PC-9 (cell line): ENCODE measurements at regions of chr10 and their contacts with region 1.

Region 1: GRCh38 chr10:70758757-70759514 is 26.2 kb downstream of the TBATA start:
- DNase-seq: peak; percentile 51 to 66
- H3K4me3 ChIP-seq: no peak overlapping the region
- H3K27ac ChIP-seq: no peak overlapping the region
- H3K4me1 ChIP-seq: peaks cover 19% of the 10 kb centered on the region
- H3K27me3 ChIP-seq: no peaks in the 10 kb centered on the region
- CTCF ChIP-seq: peak; percentile 84

Region 2: DNA sequence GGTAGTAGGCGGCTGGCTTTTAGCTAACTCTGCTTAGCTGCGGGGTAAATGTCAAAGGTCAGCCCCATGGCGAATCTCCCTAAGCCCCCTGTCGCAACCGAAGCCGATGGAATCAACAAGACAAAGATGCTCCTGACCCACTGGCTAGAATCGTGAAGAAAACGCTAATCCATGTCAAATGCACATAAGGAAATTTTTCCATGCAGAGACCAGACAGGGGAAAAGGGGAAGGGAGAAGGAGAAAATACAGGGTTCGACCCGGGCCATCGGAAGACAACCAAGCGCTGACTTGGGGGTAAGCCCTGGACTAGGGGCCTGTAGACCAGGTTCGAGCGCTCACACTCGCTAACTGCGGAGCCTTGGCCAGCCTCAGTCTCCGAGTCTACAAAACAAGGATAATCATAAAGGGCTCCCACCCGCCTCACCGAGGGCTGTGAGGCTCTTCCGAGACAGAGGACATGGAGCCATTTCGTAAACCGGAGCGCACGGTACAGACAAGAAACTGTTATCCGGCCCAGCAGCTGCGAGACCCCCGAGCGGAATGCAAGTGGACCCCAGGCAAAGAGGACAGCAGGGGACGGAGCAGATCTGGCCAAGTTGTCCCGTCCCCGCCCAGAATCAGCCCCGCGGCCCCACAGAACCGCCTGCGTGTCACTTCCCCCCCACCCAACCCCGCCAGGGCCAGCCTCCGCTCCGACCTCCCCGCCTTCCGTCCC is 589.1 kb before region 1 on chr10:
- CTCF ChIA-PET with region 1: interaction called, 10 read pairs
- POLR2A ChIA-PET with region 1: no interaction called
- intact Hi-C with region 1: no loop called
- DNase-seq: no peak
- H3K4me3 ChIP-seq: peak overlapping the region; percentile 98
- H3K27ac ChIP-seq: 0 out of 2 replicates have a peak overlapping the region, but pooled peaks have one; percentile 68
- H3K4me1 ChIP-seq: peaks cover 36% of the 10 kb centered on the region
- H3K27me3 ChIP-seq: no peaks in the 10 kb centered on the region
- CTCF ChIP-seq: no peak

Region 3: GRCh38 chr10:70549962-70550458 is 208.9 kb before region 1 on chr10:
- CTCF ChIA-PET with region 1: interaction called, 3 read pairs
- POLR2A ChIA-PET with region 1: no interaction called
- intact Hi-C with region 1: loop called (anchors 1 kb)
- DNase-seq: peak; percentile 47 to 76
- H3K4me3 ChIP-seq: no peak overlapping the region
- H3K27ac ChIP-seq: no peak overlapping the region
- H3K4me1 ChIP-seq: no peaks in the 10 kb centered on the region
- H3K27me3 ChIP-seq: no peaks in the 10 kb centered on the region
- CTCF ChIP-seq: peak; percentile 98

Region 4: DNA sequence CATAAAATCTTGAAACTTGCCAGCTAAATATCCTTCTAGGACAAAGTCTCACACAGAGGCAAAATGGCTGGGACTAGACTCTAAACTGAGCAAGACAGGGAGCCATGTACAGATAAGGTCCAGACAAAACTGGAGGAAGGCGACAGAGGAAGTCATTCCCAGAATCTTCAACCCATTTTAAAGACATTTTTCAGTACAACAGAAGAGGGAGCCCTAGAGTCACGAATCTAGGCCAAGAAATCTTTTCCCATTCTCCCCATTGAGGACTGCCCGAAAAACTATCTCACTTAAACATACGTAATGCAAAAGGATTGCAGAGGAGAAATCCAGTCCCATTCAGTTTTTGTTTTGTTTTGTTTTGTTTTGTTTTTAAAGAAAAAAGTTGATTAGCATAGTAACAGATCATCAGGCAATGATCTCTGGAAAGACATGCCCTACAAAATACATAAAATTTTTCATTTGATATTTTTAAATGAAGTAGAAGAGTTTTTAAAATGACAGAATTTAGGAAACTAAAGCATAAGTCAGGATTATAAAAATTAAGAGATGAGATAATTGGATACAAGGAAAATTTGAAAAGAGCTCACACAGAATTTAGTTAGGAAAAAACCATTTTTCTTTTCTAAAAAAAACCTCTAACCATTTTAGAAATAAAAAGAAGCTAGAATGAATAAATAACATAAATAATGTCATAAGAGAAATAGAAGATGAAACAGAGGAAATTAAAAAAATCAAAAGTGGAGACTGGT is 139.5 kb before region 1 on chr10:
- CTCF ChIA-PET with region 1: no interaction called
- POLR2A ChIA-PET with region 1: no interaction called
- intact Hi-C with region 1: loop called (anchors 1 kb)
- DNase-seq: peak in 1 of 2 experiments; percentile 37
- H3K4me3 ChIP-seq: no peak overlapping the region
- H3K27ac ChIP-seq: no peak overlapping the region
- H3K4me1 ChIP-seq: no peaks in the 10 kb centered on the region
- H3K27me3 ChIP-seq: no peaks in the 10 kb centered on the region
- CTCF ChIP-seq: peak; percentile 69

Region 5: DNA sequence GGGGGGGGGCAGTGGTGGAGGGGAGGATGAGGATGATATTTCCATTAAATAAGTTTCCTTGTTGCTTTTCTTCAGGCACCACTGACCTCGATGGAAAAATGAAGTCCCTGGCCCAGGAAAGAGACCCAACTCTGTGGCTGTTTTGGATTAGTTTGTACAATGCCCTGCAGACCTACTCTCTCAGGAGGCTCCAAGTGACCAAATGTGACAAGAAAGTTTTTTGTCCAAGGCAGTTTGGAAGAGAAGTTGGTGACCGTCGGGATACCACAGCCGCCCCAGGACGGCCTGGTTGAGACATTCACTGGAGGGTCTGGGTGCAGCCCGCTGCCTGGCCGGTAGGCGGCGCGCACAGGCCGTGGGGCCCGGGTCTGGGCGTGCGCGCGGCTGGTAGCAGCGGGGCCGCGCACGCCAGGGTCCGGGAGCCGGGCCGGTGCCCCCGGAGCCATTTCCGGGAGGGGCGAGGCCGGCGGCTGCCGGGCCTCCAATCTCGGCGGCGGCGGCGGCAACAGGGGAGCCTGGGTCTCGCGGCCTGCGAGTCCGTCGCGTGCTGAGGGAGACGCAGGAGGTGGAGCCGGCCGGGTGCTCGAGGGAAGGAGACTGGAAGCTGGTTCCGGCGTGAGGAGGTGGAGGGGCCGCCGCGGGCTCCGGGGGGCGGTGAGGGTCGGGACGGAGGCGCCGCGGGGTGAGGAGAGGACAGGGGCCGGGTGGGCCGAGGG is 56.7 kb after region 1 on chr10 and contains the start of gene SGPL1:
- CTCF ChIA-PET with region 1: no interaction called
- POLR2A ChIA-PET with region 1: no interaction called
- intact Hi-C with region 1: loop called (anchors 1 kb)
- DNase-seq: peak; percentile 68 to 91
- H3K4me3 ChIP-seq: peak within 1 kb of the TSS; percentile 68
- H3K27ac ChIP-seq: peak within 1 kb of the TSS; percentile 89
- H3K4me1 ChIP-seq: peaks cover 45% of the 10 kb centered on the region
- H3K27me3 ChIP-seq: no peaks in the 10 kb centered on the region
- CTCF ChIP-seq: peak; percentile 84
- total RNA-seq, gene SGPL1: 96.9 and 141 TPM in 2 replicates

Region 6: GRCh38 chr10:71303569-71303907 is 544.6 kb after region 1 on chr10:
- CTCF ChIA-PET with region 1: interaction called, 10 read pairs
- POLR2A ChIA-PET with region 1: no interaction called
- intact Hi-C with region 1: no loop called
- DNase-seq: no peak
- H3K4me3 ChIP-seq: no peak overlapping the region
- H3K27ac ChIP-seq: no peak overlapping the region
- H3K4me1 ChIP-seq: peaks cover 17% of the 10 kb centered on the region
- H3K27me3 ChIP-seq: no peaks in the 10 kb centered on the region
- CTCF ChIP-seq: peak; percentile 16; the same call in 1 of the 2 replicates